ENCODE measurements at regions of chr4 and their contacts with region 1.

Region 1: DNA sequence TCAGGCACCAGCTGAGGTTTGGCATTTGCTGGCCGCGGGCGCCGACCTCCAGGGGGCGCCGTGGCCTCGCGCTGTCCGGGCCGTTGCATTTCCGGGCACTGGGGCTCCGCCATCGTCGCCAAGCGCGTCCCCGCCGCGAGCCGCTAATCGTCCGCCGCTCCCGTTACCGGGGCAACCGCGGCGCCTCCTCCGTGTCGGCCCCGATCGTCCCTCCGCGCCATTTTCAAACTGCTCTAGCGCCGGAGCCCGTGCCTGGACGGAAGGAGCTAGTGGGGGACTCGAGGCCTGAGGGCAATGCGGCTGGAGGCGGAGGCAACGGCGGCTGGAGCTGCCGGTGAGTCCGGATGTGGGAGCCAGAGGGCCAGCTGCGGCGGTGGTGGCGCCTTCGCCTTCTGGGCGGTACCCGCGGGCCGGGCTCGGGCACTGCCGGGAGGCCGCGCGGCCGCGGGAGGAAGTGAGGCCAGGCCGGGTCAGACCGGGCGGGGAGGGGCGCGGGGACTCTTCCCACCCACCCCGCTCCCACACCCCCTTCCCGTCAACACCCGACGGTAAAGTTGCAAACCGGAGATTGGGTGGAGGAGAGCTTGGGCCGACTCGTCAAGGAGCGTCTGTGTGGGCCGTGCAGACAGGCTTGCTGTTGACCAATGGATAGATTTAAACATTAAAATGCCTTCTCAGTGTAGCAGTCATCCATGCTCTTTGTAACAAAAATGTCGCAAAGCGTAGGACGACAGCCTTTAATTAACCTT is at the start of gene CEP135:
- DNase-seq: peak; percentile 95 to 98 (median 98)
- H3K4me3 ChIP-seq: peak within 1 kb of the TSS; percentile 73 to 86 (median 81)
- H3K27ac ChIP-seq: peak within 1 kb of the TSS; percentile 92 to 97
- H3K4me1 ChIP-seq: peaks cover 23 to 47% (median 34%) of the 10 kb centered on the region in 4 experiments
- H3K27me3 ChIP-seq: no peaks in the 10 kb centered on the region

Region 2: GRCh38 chr4:55892156-55892555 is 56.7 kb before region 1 on chr4:
- CTCF ChIA-PET with region 1: interaction called, 11 read pairs
- POLR2A ChIA-PET with region 1: no interaction called
- DNase-seq: peak in 2 of 3 donors; percentile 28 to 53
- H3K4me3 ChIP-seq: peak overlapping the region in 1 of 7 experiments; percentile 3
- H3K27ac ChIP-seq: peak overlapping the region; percentile 28 to 44
- H3K4me1 ChIP-seq: peaks cover 0 to 24% (median 11%) of the 10 kb centered on the region in 4 experiments
- H3K27me3 ChIP-seq: no peaks in the 10 kb centered on the region

Region 3: DNA sequence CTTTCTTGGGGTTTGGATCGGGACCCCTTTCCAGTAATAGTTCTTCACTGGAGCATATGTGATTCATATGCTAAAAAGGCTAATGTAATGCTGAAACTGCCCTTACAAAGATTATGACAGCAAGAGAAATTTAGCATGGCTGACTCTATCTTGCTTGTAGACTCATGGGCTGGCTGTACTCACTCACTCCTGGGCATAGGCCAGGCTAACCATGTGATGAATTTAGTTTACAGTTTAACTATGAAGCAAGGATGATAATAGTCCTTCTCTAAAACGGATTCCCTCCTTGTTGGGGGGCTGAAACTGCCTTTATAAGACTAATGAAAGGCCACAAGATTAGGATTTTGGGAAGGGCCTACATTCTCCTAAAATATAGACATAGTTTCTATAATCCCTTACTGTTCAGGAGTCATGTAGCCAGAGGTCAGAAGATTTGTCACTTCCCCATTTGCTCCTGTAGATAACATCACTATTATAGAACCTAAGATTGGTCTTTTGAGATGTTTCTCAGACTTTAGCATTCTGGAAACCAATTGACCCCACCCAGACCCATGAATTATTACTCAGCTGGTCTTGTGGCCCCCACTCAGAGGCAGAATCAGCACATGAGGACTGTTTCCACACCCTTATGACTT is 21.0 kb before region 1 on chr4:
- CTCF ChIA-PET with region 1: interaction called, 17 read pairs
- POLR2A ChIA-PET with region 1: interaction called, 3 read pairs
- DNase-seq: peak in 2 of 3 donors; percentile 19 to 35
- H3K4me3 ChIP-seq: no peak overlapping the region
- H3K27ac ChIP-seq: no peak overlapping the region
- H3K4me1 ChIP-seq: peaks cover 9 to 26% (median 15%) of the 10 kb centered on the region in 4 experiments
- H3K27me3 ChIP-seq: no peaks in the 10 kb centered on the region

Region 4: GRCh38 chr4:55933611-55934010 is 15.3 kb before region 1 on chr4:
- CTCF ChIA-PET with region 1: interaction called, 17 read pairs
- POLR2A ChIA-PET with region 1: interaction called, 8 read pairs
- DNase-seq: no peak
- H3K4me3 ChIP-seq: no peak overlapping the region
- H3K27ac ChIP-seq: no peak overlapping the region
- H3K4me1 ChIP-seq: peaks cover 12 to 34% (median 20%) of the 10 kb centered on the region in 4 experiments
- H3K27me3 ChIP-seq: no peaks in the 10 kb centered on the region

Region 5: DNA sequence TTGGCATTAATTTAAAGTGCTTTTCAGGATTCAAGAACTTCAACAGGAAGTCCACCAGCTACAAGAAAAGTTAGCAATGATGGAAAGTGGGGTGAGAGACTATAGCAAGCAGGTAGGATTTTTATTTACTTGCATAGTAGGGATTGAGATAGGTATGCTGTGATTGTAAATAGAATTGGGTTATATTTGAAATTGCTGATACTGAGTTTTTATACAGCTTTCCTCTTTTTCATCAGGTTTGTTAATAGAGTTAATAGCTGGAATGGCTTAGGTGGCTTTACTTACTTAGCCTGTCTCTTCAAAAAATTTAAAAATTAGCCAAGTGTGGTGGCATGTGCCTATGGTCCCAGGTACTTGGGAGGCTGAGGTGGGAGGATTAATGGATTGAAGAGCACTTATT is 10.8 kb after region 1 on chr4:
- CTCF ChIA-PET with region 1: interaction called, 20 read pairs
- POLR2A ChIA-PET with region 1: no interaction called
- DNase-seq: no peak
- H3K4me3 ChIP-seq: no peak overlapping the region
- H3K27ac ChIP-seq: no peak overlapping the region
- H3K4me1 ChIP-seq: peaks cover 0 to 4% (median under 1%) of the 10 kb centered on the region in 4 experiments
- H3K27me3 ChIP-seq: no peaks in the 10 kb centered on the region

Region 6: DNA sequence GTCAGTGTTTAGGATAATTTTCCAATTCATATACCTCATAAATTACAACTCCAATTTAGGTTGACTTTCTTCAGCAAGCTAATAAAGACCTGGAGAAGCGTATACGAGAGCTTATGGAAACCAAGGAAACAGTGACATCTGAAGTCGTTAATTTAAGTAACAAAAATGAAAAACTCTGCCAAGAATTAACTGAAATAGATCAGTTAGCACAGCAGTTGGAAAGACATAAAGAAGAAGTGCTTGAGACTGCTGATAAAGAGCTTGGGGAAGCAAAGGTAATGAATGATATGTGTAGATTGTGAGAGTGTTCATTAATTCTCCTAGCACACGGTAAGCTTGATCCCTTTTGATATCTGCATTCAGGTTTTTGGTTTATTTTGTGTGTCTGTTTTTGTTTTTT is 16.7 kb after region 1 on chr4:
- CTCF ChIA-PET with region 1: interaction called, 14 read pairs
- POLR2A ChIA-PET with region 1: no interaction called
- DNase-seq: peak; percentile 16 to 72 (median 47)
- H3K4me3 ChIP-seq: no peak overlapping the region
- H3K27ac ChIP-seq: peak overlapping the region; percentile 52 to 59
- H3K4me1 ChIP-seq: peaks cover 0 to 8% (median 2%) of the 10 kb centered on the region in 4 experiments
- H3K27me3 ChIP-seq: no peaks in the 10 kb centered on the region

Region 7: DNA sequence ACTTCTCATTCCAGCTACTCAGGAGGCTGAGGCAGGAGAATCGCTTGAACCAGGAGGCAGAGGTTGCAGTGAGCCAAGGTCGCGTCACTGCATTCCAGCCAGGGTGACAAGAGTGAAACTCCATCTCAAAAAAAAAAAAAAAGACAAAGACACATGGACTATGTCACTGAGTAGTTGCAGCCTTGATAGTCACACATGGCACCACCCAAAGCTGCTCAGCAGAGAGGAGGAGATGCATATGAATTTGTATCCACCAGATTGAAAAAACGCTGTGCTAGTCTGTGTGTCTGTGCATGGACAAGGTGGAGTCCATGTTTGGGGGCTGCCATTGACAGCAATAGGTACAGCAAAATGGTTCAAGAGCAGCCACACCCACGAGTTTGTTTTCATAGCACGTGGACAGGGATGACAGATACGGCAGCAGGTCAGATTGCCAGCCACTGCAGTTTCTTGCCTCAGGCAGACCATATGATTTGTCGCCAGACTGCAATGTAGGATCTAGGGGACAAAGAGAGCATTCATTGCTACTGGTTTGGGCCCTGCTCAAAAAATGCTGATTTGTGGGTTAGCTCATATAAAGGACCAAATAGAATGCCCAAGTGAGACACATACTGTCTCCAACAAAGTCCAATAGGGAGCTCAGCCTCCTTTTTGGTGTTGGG is 89.7 kb after region 1 on chr4:
- CTCF ChIA-PET with region 1: no interaction called
- POLR2A ChIA-PET with region 1: no interaction called
- DNase-seq: no peak
- H3K4me3 ChIP-seq: no peak overlapping the region
- H3K27ac ChIP-seq: no peak overlapping the region
- H3K4me1 ChIP-seq: no peaks in the 10 kb centered on the region
- H3K27me3 ChIP-seq: no peaks in the 10 kb centered on the region

Region 8: GRCh38 chr4:56060036-56060435 is 111.1 kb after region 1 on chr4:
- CTCF ChIA-PET with region 1: no interaction called
- POLR2A ChIA-PET with region 1: no interaction called
- DNase-seq: no peak
- H3K4me3 ChIP-seq: no peak overlapping the region
- H3K27ac ChIP-seq: no peak overlapping the region
- H3K4me1 ChIP-seq: peaks cover 0 to 11% (median 3%) of the 10 kb centered on the region in 4 experiments
- H3K27me3 ChIP-seq: no peaks in the 10 kb centered on the region

Measured in common myeloid progenitor, CD34-positive (primary cell).